PC-3 (cell line): ENCODE measurements at regions of chr10 and their contacts with region 1.

Region 1: DNA sequence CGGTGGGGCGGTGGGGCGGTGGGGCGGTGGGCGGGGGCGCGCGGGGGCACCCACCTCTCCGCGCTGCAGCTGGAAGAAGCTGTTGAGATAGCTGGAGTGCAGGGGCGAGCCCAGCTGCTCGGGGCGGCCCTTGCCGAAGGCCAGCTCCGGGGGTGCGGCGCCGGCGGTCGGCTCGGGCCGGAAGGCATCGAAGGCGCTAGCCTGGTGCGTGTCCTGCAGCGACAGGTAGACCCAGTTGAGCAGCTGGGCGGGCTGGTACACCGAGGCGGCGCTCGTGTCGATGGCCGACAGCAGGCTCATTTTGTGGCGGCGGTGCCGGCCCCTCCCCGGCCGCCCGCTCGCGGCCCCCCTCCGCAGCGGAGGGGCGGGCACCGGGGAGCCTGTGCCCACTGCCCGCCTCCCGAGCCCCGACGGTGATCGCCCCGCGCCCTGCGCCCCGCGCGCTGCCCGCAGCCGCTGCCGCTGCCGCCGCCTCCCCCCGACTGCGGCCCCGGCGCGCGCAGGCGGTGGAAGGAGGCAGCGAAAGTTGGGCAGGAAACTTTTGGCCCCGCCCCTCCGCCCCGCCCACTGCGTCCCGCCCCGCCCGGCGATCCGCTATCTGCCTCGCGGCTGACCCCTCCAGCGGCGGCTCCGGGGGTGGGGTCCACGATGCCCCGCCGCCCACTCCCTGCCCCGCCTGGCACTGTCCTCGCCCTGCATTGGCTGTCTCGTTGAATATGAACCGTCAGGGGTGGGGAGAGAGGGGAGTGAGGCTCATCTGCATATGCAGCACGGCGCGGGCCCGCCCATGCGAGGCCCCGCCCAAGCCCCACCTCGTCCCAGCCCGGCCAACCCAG is at the start of gene ZCCHC24:
- DNase-seq: peak; percentile 100
- ATAC-seq: peak; percentile 78
- H3K4me3 ChIP-seq: peak within 1 kb of the TSS; percentile 70
- H3K27ac ChIP-seq: peak within 1 kb of the TSS; percentile 15
- H3K4me1 ChIP-seq: peaks cover 59% of the 10 kb centered on the region
- H3K27me3 ChIP-seq: no peaks in the 10 kb centered on the region
- CTCF ChIP-seq: no peak
- total RNA-seq, gene ZCCHC24: 32.9 and 40.7 TPM in 2 replicates

Region 2: GRCh38 chr10:78047314-78047891 is 1398.0 kb before region 1 on chr10:
- CTCF ChIA-PET with region 1: no interaction called
- POLR2A ChIA-PET with region 1: no interaction called
- intact Hi-C with region 1: loop called (anchors 10 kb)
- DNase-seq: peak; percentile 100
- ATAC-seq: peak; percentile 75
- H3K4me3 ChIP-seq: no peak overlapping the region
- H3K27ac ChIP-seq: no peak overlapping the region
- H3K4me1 ChIP-seq: no peaks in the 10 kb centered on the region
- H3K27me3 ChIP-seq: no peaks in the 10 kb centered on the region
- CTCF ChIP-seq: peak; percentile 100

Region 3: DNA sequence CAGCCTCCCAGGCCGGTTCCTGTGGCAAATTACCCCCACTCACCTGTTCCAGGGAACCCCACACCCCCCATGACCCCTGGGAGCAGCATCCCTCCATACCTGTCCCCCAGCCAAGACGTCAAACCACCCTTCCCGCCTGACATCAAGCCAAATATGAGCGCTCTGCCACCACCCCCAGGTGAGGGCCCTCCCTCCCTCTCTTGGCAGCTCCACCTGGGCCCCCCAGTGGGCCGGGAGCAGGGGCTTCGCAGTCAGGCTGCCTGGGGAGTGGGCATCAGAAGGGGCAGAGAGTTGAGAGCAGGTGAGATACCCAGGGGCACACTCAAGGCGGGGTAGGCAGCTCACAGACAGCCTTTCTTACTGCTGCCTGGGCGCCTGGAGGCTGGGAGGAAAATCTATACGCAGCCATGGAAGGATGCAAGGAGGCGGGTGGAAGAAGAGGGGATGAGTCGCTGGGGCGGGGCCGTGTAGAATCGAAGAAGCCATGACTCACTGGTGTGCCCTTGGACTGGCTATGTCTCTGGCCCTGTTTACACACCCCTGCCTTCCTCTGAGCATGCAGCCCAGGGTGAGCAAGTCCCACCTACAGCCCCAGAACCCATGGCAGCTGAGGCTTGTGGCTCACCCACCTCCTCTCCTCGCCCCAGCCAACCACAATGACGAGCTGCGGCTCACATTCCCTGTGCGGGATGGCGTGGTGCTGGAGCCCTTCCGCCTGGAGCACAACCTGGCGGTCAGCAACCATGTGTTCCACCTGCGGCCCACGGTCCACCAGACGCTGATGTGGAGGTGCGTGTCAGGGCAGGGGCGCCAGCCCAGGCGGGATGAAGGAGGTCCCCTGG is 146.7 kb before region 1 on chr10:
- CTCF ChIA-PET with region 1: no interaction called
- POLR2A ChIA-PET with region 1: interaction called, 3 read pairs
- intact Hi-C with region 1: loop called (anchors 2 kb)
- DNase-seq: peak; percentile 100
- ATAC-seq: peak; percentile 93
- H3K4me3 ChIP-seq: no peak overlapping the region
- H3K27ac ChIP-seq: peak overlapping the region; percentile 56
- H3K4me1 ChIP-seq: peaks cover 44% of the 10 kb centered on the region
- H3K27me3 ChIP-seq: no peaks in the 10 kb centered on the region
- CTCF ChIP-seq: no peak

Region 4: DNA sequence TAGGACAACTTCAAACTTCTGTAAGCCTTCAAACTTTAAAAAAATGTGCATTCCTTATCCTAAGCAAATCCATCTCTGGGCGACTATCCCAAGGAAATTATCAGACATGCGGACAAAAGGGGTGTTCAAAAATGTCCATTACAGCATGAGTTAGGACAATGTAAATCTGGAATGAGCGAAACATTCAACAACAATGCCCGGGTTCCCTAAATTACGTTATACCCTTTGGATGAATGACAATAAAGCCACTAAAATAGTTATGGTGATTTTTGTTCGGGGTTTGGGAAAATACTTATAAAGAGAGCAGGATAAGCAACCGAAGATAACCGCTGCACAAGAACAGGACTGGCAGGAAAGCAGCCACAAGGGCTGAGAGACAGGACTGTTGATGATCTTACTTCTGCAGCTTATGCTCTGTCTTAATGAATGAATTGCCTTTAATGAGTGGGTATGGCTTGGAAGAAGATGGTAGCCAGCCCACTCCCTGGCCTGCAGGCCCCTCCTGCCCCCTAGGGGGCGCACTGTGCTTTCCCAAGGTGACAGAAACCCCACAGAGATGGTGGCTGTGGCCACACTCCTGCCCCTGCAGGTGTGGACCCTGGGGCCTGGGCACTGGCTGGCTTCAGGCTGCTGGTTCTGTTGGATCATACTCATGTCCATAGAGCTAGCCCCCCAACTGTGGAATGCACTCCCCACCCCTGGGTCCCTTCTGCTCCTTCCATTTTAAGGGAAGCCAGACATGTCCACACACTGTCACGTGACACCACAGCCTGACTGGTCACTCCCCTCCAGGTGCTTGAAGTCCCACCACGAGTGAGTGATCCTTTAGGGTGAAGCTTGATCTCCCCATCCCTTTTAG is 45.0 kb before region 1 on chr10:
- CTCF ChIA-PET with region 1: no interaction called
- POLR2A ChIA-PET with region 1: no interaction called
- intact Hi-C with region 1: loop called (anchors 1 kb)
- DNase-seq: peak; percentile 97
- ATAC-seq: peak; percentile 57
- H3K4me3 ChIP-seq: no peak overlapping the region
- H3K27ac ChIP-seq: no peak overlapping the region
- H3K4me1 ChIP-seq: peaks cover 23% of the 10 kb centered on the region
- H3K27me3 ChIP-seq: no peaks in the 10 kb centered on the region
- CTCF ChIP-seq: peak; percentile 100

Region 5: DNA sequence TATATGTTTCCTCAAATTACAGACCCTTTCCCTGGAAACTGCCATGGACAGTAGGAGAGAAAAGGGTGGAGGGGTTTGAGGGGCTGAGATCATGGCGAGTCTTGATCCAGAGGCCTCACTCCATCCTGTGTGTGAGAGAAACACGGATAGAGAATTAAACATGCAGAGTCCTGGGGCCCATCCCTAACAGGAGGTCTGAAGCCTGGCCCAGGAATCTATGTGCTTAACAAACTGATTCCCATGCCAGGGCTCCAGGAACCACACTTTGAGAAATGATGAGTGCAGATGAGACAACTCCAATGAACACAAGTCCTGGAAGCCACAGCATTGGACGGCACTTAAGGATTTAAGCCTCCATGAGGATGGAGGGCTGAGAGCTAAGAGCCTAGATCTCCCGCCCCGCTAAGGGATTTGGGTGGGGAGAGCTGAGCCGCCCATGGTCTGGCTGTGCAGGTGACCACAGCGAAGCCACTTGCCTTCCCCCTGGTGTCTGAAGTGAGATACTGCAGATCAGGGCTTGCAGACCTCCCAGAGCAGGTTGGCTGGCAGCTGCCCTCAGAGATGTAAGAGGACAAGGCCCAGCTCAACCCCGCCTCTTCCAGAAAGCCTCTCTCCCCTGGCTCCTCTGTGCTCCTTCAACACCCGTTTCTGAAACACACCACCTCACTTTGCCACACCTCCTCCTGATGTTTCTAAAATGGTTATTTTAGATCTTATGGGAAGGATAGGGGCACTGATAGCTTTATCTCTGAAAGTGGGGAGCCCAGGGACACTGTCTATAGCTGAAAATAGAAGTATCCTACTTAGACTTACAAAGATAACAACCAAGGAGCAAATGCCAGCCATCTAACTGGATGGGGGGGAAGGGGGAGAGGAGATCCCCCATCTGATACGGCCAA is 42.2 kb after region 1 on chr10:
- CTCF ChIA-PET with region 1: no interaction called
- POLR2A ChIA-PET with region 1: interaction called, 3 read pairs
- intact Hi-C with region 1: loop called (anchors 2 kb)
- DNase-seq: peak; percentile 97
- ATAC-seq: peak; percentile 69
- H3K4me3 ChIP-seq: no peak overlapping the region
- H3K27ac ChIP-seq: peak overlapping the region; percentile 30
- H3K4me1 ChIP-seq: peaks cover 24% of the 10 kb centered on the region
- H3K27me3 ChIP-seq: no peaks in the 10 kb centered on the region
- CTCF ChIP-seq: peak; percentile 99

Region 6: GRCh38 chr10:80078448-80079311 is 633.3 kb after region 1 on chr10 and contains the start of gene TMEM254:
- CTCF ChIA-PET with region 1: no interaction called
- POLR2A ChIA-PET with region 1: no interaction called
- intact Hi-C with region 1: loop called (anchors 2 kb)
- DNase-seq: peak; percentile 100
- ATAC-seq: peak; percentile 85
- H3K4me3 ChIP-seq: peak within 1 kb of the TSS; percentile 67
- H3K27ac ChIP-seq: peak within 1 kb of the TSS; percentile 72
- H3K4me1 ChIP-seq: peaks cover 39% of the 10 kb centered on the region
- H3K27me3 ChIP-seq: no peaks in the 10 kb centered on the region
- CTCF ChIP-seq: no peak
- total RNA-seq, gene TMEM254: 53.7 and 68.3 TPM in 2 replicates

Region 7: DNA sequence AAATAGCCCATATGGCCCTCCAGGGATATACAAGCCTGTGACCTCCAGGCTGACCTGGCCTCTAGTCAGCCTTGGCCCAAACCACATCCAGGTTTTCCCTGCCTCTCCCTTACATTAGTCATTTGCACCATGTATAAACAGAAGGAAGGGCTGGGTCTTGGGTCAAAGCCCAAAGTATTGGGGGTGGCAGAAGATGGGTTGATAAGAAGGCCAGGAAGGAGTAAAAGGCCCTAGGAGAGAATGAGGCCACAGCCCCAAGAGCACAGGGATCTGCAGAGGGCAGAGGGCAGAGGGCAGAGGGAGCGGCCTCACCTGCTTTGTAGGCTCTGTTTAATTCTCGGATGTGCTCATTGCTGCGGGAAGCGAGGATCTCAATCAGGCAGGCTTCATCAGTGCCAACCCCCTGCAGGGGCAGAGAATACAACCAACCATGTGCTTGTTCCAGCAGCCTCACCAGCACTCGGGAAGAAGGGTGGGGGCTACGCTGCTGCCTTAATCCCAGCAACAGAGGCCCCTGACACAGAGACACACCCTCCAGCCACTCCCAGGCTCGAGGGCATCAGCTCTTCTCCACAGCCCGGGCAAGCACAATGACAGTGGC is 718.5 kb after region 1 on chr10:
- CTCF ChIA-PET with region 1: no interaction called
- POLR2A ChIA-PET with region 1: no interaction called
- intact Hi-C with region 1: loop called (anchors 1 kb)
- DNase-seq: peak; percentile 100
- ATAC-seq: peak; percentile 71
- H3K4me3 ChIP-seq: peak overlapping the region; percentile 23
- H3K27ac ChIP-seq: peak overlapping the region; percentile 78
- H3K4me1 ChIP-seq: peaks cover 55% of the 10 kb centered on the region
- H3K27me3 ChIP-seq: no peaks in the 10 kb centered on the region
- CTCF ChIP-seq: no peak